ENCODE measurements at regions of chr1 and their contacts with region 1.

Region 1: GRCh38 chr1:24022581-24023361 is 42.6 kb upstream of the SRSF10 start:
- DNase-seq: peak in 1 of 3 donors; percentile 45
- ATAC-seq: peak; percentile 47
- H3K4me3 ChIP-seq: no peak overlapping the region
- H3K4me1 ChIP-seq: peaks cover 41% of the 10 kb centered on the region
- CTCF ChIP-seq: no peak

Region 2: DNA sequence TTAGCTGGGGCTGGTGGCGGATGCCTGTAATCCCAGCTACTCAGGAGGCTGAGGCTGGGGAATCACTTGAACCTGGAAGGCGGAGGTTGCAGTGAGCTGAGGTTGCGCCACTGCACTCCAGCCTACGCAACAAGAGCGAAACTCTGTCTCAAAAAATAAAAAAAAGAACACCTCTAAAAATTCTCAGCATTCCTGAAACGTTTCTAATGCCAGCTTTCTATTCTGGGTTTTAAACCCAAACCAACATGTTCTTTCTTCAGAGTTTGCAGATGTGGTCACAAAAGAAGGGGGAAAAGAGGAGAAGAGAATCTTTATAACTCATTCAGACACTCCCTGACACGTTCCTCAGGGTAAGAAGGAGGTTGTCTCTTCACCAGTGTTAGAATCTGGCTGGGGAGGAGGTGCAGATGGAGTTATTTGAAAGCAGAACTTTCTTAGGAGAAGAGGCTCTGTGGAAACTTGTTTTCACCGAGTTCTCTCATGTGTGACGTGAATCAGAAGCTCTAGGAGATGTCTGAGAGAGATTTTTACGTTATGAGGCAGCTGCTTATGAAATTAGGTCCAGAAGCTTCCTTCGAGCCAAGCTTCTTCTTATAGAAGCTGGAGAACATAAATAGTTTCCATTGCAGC is 91.8 kb before region 1 on chr1:
- intact Hi-C with region 1: no loop called
- DNase-seq: no peak
- ATAC-seq: no peak
- H3K4me3 ChIP-seq: no peak overlapping the region
- H3K4me1 ChIP-seq: no peaks in the 10 kb centered on the region
- CTCF ChIP-seq: no peak

Region 3: GRCh38 chr1:23959041-23959460 is 63.7 kb before region 1 on chr1:
- intact Hi-C with region 1: loop called in 1 of 2 experiments (anchors 5 kb)
- DNase-seq: peak; percentile 89 to 94 (median 92)
- ATAC-seq: peak; percentile 86
- H3K4me3 ChIP-seq: peak overlapping the region; percentile 83
- H3K4me1 ChIP-seq: peaks cover 21% of the 10 kb centered on the region
- CTCF ChIP-seq: no peak

Region 4: DNA sequence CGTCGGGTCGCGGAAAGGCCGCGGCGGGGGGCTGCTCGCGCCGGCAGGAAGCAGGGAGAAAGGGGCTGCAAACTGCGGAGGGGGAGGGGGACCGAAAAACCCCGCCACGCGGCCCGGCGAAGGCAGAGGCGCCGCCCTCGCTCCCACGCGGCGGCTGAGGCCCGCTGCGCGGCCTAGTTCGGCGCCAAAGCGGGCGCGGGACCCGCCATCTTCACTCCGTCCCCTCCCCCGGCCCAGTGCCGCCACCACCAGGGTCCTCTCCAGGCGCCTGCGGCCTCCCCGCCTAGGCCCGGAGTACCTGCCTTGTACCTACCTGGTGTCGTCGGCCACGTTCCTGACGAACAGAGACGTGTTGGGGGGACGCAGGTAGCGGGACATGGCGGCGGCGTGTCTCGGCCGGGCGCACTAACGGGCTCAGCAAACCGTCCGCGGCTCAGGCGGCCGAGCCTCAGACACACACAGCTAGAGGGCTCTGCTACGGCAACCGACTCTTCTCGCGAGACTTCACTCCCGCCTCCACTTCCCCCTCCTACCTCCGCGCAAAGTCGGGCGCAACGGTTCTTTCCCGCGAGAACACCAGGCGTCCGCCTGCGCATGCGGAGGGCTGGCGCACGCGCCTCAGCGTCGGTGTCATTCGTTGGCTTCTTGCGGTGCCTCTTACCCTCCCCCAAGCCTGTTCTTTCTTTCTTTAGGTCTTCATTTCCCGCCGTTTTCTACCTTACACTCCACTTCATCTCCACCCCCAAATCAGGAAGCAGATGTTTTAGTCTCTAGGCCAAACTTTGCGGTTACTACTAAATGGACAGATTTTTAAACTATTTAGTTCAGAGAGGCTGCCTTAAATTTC is 42.7 kb before region 1 on chr1 and contains the start of gene SRSF10:
- intact Hi-C with region 1: loop called in 1 of 2 experiments (anchors 5 kb)
- DNase-seq: peak; percentile 98 to 99 (median 98)
- ATAC-seq: peak; percentile 99
- H3K4me3 ChIP-seq: peak within 1 kb of the TSS; percentile 89
- H3K4me1 ChIP-seq: peaks cover 32% of the 10 kb centered on the region
- CTCF ChIP-seq: no peak
- total RNA-seq, gene SRSF10: 85.8 to 98.0 (median 94.0) TPM